ENCODE measurements at regions of chr4 and their contacts with region 1.

Region 1: DNA sequence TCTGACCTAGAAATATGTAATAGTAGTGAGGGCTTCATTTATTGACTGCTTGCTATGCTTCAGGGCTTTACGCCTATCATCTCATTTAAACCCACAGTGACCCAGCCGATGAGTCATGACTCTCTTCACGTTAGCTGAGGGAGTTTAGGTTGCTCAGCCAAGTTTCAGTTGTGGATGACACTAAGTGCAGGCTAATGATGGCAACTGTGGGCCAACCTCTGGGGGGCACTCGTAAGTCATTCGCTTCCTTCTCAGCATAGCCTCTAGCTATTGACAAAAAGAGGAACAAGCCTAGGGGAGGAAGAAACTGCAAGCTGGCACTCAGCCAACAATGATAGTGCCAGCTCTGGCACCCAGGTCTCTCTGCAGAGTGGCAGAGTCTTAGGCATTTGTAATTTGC is 325.0 kb downstream of the ARHGAP10 start:
- DNase-seq: peak; percentile 37 to 77 (median 54)
- H3K4me3 ChIP-seq: no peak overlapping the region
- H3K4me3 Mint-ChIP-seq: peak overlapping the region in 6 of 8 donors; percentile 6 to 76 (median 44)
- H3K27ac ChIP-seq: peak overlapping the region; percentile 11
- H3K27ac Mint-ChIP-seq: peak overlapping the region; percentile 59 to 92 (median 85)
- H3K4me1 ChIP-seq: peaks cover 98% of the 10 kb centered on the region
- H3K4me1 Mint-ChIP-seq: peaks cover 71 to 98% (median 88%) of the 10 kb centered on the region in 4 donors
- H3K27me3 ChIP-seq: no peaks in the 10 kb centered on the region
- H3K27me3 Mint-ChIP-seq: no peaks in the 10 kb centered on the region

Region 2: GRCh38 chr4:147617173-147617840 is 439.6 kb before region 1 on chr4 and contains the start of gene TMEM184C:
- CTCF ChIA-PET with region 1: no interaction called
- POLR2A ChIA-PET with region 1: interaction called, 3 read pairs
- intact Hi-C with region 1: loop called (anchors 2 kb)
- DNase-seq: peak; percentile 97 to 98 (median 98)
- H3K4me3 ChIP-seq: peak within 1 kb of the TSS; percentile 82 to 99
- H3K4me3 Mint-ChIP-seq: peak within 1 kb of the TSS; percentile 92 to 98 (median 96)
- H3K27ac ChIP-seq: peak within 1 kb of the TSS; percentile 93
- H3K27ac Mint-ChIP-seq: peak within 1 kb of the TSS; percentile 96 to 99 (median 97)
- H3K4me1 ChIP-seq: peaks cover 49% of the 10 kb centered on the region
- H3K4me1 Mint-ChIP-seq: peaks cover 22 to 51% (median 36%) of the 10 kb centered on the region in 4 donors
- H3K27me3 ChIP-seq: no peaks in the 10 kb centered on the region
- H3K27me3 Mint-ChIP-seq: peaks cover 0 to 1% of the 10 kb centered on the region in 2 donors
- total RNA-seq, gene TMEM184C: 28.8 to 31.5 TPM

Region 3: DNA sequence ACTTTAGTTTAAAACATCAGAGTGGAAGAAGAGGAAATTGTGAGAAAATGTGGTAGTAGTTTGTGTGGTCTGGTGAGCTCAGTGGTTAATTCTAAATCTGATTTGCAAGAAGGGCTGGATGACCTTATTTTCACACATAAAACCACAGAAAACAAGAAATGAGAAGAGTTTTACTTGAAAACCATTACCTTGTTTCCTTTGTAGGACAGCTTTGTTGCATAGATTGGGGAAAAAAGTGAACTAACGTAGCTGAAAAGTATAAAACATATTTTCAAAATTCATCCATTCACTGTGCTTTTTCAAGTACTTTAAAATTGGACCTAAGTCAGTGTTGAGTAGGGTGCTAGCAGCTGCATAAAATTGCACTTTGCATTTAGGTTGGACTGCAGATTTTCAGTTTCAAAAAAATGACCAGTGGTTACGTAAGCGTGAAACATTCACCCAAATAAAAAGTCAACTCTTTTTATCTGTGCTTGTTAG is 113.7 kb before region 1 on chr4:
- CTCF ChIA-PET with region 1: interaction called, 4 read pairs
- POLR2A ChIA-PET with region 1: interaction called, 8 read pairs
- intact Hi-C with region 1: loop called (anchors 5 kb)
- DNase-seq: peak in 4 of 5 donors; percentile 35 to 51 (median 40)
- H3K4me3 ChIP-seq: no peak overlapping the region
- H3K4me3 Mint-ChIP-seq: peak overlapping the region in 7 of 8 donors; percentile 14 to 71 (median 54)
- H3K27ac ChIP-seq: peak overlapping the region; percentile 23
- H3K27ac Mint-ChIP-seq: peak overlapping the region; percentile 24 to 77 (median 53)
- H3K4me1 ChIP-seq: peaks cover 30% of the 10 kb centered on the region
- H3K4me1 Mint-ChIP-seq: peaks cover 23 to 32% (median 29%) of the 10 kb centered on the region in 4 donors
- H3K27me3 ChIP-seq: no peaks in the 10 kb centered on the region
- H3K27me3 Mint-ChIP-seq: no peaks in the 10 kb centered on the region

Region 4: GRCh38 chr4:147969573-147970385 is 87.1 kb before region 1 on chr4:
- CTCF ChIA-PET with region 1: no interaction called
- POLR2A ChIA-PET with region 1: no interaction called
- intact Hi-C with region 1: no loop called
- DNase-seq: no peak
- H3K4me3 ChIP-seq: no peak overlapping the region
- H3K4me3 Mint-ChIP-seq: peak overlapping the region in 1 of 8 donors; percentile 31
- H3K27ac ChIP-seq: no peak overlapping the region
- H3K27ac Mint-ChIP-seq: peak overlapping the region in 3 of 7 donors; percentile 5 to 63 (median 36)
- H3K4me1 ChIP-seq: no peaks in the 10 kb centered on the region
- H3K4me1 Mint-ChIP-seq: peaks cover 0 to 2% (median 0%) of the 10 kb centered on the region in 4 donors
- H3K27me3 ChIP-seq: no peaks in the 10 kb centered on the region
- H3K27me3 Mint-ChIP-seq: no peaks in the 10 kb centered on the region

Region 5: DNA sequence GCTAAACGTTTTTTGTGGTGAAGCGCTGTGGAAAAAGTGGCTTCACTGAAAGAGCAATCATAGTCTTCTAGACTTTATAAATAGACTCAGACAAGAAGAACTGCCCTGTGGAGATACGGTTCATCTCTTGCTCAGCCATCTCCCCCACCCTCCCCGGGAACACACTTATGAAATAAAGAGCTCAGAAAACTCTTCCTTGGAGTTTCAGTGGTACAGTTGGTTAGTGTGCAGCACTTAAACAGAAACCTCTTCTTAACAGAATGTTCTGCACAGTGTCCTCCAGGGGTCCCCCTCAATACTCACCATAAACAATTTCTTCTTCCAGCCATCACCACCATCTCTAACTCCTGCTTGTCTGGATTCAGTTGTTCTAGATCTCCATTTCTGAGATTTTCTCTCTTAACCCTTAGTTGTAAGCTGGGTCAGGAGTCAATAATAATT is 11.9 kb before region 1 on chr4:
- CTCF ChIA-PET with region 1: interaction called, 33 read pairs
- POLR2A ChIA-PET with region 1: interaction called, 17 read pairs
- intact Hi-C with region 1: no loop called
- DNase-seq: peak in 3 of 5 donors; percentile 30 to 35 (median 31)
- H3K4me3 ChIP-seq: no peak overlapping the region
- H3K4me3 Mint-ChIP-seq: no peak overlapping the region
- H3K27ac ChIP-seq: no peak overlapping the region
- H3K27ac Mint-ChIP-seq: peak overlapping the region in 3 of 7 donors; percentile 54 to 78 (median 63)
- H3K4me1 ChIP-seq: peaks cover 17% of the 10 kb centered on the region
- H3K4me1 Mint-ChIP-seq: peaks cover 12 to 39% (median 22%) of the 10 kb centered on the region in 4 donors
- H3K27me3 ChIP-seq: no peaks in the 10 kb centered on the region
- H3K27me3 Mint-ChIP-seq: no peaks in the 10 kb centered on the region